A673 (cell line): ENCODE measurements at regions of chr14 and their contacts with region 1.

Region 1: GRCh38 chr14:87002776-87003175 is 990.2 kb downstream of the GALC start:
- DNase-seq: peak; percentile 50
- H3K4me3 ChIP-seq: no peak overlapping the region
- H3K27ac ChIP-seq: no peak overlapping the region
- H3K4me1 ChIP-seq: peaks cover 43% of the 10 kb centered on the region
- H3K27me3 ChIP-seq: no peaks in the 10 kb centered on the region
- CTCF ChIP-seq: peak; percentile 54

Region 2: DNA sequence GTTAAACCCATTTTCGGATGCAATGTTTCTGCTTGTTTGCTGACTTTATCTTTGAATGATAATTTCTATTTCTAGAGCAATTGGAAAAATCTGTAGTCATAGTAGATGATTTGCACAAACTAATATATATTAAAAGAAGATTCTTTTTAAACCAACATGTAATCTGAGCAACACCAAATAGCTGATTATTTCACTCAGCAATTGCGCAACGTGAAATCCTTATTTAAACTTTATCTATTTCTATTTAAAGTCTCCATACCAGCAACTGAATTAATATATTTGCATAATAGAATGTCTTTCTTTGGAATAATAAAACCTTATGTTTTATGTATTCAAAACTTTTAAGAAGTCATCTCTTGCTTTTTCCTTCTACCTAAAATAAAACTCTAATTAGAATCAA is 340.4 kb before region 1 on chr14:
- CTCF ChIA-PET with region 1: no interaction called
- POLR2A ChIA-PET with region 1: no interaction called
- intact Hi-C with region 1: loop called (anchors 10 kb)
- DNase-seq: no peak
- H3K4me3 ChIP-seq: no peak overlapping the region
- H3K27ac ChIP-seq: no peak overlapping the region
- H3K4me1 ChIP-seq: peaks cover 8% of the 10 kb centered on the region
- H3K27me3 ChIP-seq: no peaks in the 10 kb centered on the region
- CTCF ChIP-seq: no peak